PC-3 (cell line): ENCODE measurements at regions of chr7 and their contacts with region 1.

Region 1: GRCh38 chr7:47581806-47582763 is at the start of gene TNS3:
- DNase-seq: peak; percentile 57
- ATAC-seq: peak; percentile 38
- H3K4me3 ChIP-seq: peak within 1 kb of the TSS; percentile 89
- H3K27ac ChIP-seq: peak within 1 kb of the TSS; percentile 95
- H3K4me1 ChIP-seq: peaks cover 52% of the 10 kb centered on the region
- H3K27me3 ChIP-seq: no peaks in the 10 kb centered on the region
- CTCF ChIP-seq: 0 out of 2 replicates have a peak, but pooled peaks have one; percentile 17
- total RNA-seq, gene TNS3: 71.4 and 72.3 TPM in 2 replicates

Region 2: GRCh38 chr7:47482013-47482875 is 99.8 kb before region 1 on chr7:
- CTCF ChIA-PET with region 1: no interaction called
- POLR2A ChIA-PET with region 1: no interaction called
- intact Hi-C with region 1: loop called (anchors 2 kb)
- DNase-seq: peak; percentile 83
- ATAC-seq: peak; percentile 88
- H3K4me3 ChIP-seq: peak overlapping the region; percentile 6; the same call in 1 of the 2 replicates
- H3K27ac ChIP-seq: peak overlapping the region; percentile 80
- H3K4me1 ChIP-seq: peaks cover 38% of the 10 kb centered on the region
- H3K27me3 ChIP-seq: no peaks in the 10 kb centered on the region
- CTCF ChIP-seq: no peak

Region 3: GRCh38 chr7:47600199-47601118 is 18.4 kb after region 1 on chr7:
- CTCF ChIA-PET with region 1: interaction called, 4 read pairs
- POLR2A ChIA-PET with region 1: no interaction called
- intact Hi-C with region 1: loop called (anchors 1 kb)
- DNase-seq: peak; percentile 85
- ATAC-seq: peak; percentile 66
- H3K4me3 ChIP-seq: peak overlapping the region; percentile 42; the same call in 1 of the 2 replicates
- H3K27ac ChIP-seq: peak overlapping the region; percentile 93
- H3K4me1 ChIP-seq: peaks cover 49% of the 10 kb centered on the region
- H3K27me3 ChIP-seq: no peaks in the 10 kb centered on the region
- CTCF ChIP-seq: no peak

Region 4: DNA sequence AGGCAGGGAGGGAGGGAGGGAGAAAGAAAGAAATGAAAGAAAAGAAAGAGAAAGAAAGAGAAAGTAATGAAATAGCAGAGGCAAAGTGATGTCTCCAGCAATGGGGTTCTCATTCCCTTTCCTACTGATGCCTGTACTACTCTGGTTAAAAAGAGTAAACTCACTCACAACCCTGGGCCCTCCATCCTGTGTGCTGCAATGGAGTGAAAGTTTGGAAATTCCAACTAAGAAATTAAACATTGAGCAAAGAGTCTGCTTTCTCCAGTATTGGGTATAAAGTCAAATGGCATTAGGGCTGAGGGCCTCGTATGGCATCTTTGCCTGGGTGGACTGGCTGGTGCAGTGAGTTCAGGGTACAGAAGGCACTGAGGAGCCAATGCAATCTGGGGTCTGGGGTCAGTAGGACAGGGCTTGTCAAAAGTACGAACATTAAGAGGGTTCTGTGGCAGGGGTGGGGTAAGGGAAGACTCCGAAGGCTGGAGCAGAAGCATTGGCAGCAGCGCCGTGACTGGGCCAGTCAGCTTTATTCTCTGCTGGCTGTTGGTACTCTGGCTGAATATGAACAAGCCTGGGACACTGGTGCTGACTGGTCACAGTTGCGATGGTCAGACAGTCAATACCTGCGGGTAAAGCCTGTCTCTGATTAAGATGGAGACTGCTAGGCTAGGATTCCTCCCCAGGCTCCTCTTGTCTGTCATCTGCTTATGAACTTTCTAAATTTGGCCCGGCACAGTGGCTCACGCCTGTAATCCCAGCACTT is 23.9 kb after region 1 on chr7:
- CTCF ChIA-PET with region 1: interaction called, 4 read pairs
- POLR2A ChIA-PET with region 1: no interaction called
- intact Hi-C with region 1: loop called (anchors 1 kb)
- DNase-seq: no peak
- ATAC-seq: no peak
- H3K4me3 ChIP-seq: no peak overlapping the region
- H3K27ac ChIP-seq: peak overlapping the region; percentile 87
- H3K4me1 ChIP-seq: peaks cover 40% of the 10 kb centered on the region
- H3K27me3 ChIP-seq: no peaks in the 10 kb centered on the region
- CTCF ChIP-seq: no peak

Region 5: GRCh38 chr7:47669061-47669891 is 87.2 kb after region 1 on chr7:
- CTCF ChIA-PET with region 1: no interaction called
- POLR2A ChIA-PET with region 1: no interaction called
- intact Hi-C with region 1: loop called (anchors 5 kb)
- DNase-seq: peak; percentile 92
- ATAC-seq: peak; percentile 100
- H3K4me3 ChIP-seq: no peak overlapping the region
- H3K27ac ChIP-seq: peak overlapping the region; percentile 78
- H3K4me1 ChIP-seq: peaks cover 14% of the 10 kb centered on the region
- H3K27me3 ChIP-seq: no peaks in the 10 kb centered on the region
- CTCF ChIP-seq: no peak

Region 6: DNA sequence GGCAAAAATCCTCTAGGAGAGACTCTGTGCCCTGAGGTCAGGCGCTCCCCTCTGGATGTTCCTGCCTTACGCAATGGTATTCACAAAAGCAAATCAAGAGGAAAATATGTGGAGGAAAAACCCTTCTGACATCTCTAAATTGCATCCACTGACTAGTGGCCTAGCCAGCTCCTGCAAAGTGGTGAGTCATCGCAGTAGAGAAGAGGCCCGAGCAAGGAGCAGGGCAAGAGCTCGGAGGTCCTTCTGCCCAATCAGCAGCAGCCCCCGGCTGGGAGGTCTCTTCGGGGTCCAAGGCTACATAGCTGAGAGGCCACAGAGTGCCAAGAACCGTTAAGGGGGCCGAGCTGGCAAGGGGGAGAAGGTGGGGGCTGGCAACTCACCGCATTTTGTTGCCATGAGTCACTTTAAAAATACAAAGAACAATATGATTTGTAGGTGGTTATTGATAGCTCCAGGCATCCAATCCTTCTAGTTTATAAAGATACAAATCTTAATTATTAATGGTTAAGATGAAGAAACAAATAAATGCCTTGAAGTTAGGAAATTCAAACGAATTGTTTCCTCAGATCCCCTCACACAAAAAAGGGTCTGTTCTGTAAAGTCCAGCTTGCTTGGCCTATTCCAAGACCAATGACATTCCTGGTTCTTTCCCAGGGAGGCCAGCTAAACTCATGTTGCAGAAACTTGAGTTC is 204.6 kb after region 1 on chr7:
- CTCF ChIA-PET with region 1: interaction called, 5 read pairs
- POLR2A ChIA-PET with region 1: no interaction called
- intact Hi-C with region 1: loop called (anchors 2 kb)
- DNase-seq: peak; percentile 98
- ATAC-seq: peak; percentile 86
- H3K4me3 ChIP-seq: peak overlapping the region; percentile 38
- H3K27ac ChIP-seq: peak overlapping the region; percentile 95
- H3K4me1 ChIP-seq: peaks cover 62% of the 10 kb centered on the region
- H3K27me3 ChIP-seq: no peaks in the 10 kb centered on the region
- CTCF ChIP-seq: no peak